Gastrocnemius medialis (tissue), 4 donors: ENCODE measurements at regions of chr12 and their contacts with region 1.

Region 1: GRCh38 chr12:120580787-120581723 is at the start of gene POP5:
- DNase-seq: peak; percentile 96
- ATAC-seq: peak; percentile 97
- H3K4me3 ChIP-seq: peak within 1 kb of the TSS; percentile 84 to 94 (median 92)
- H3K27ac ChIP-seq: peak within 1 kb of the TSS; percentile 68 to 86 (median 80)
- H3K4me1 ChIP-seq: peaks cover 6 to 14% of the 10 kb centered on the region in 2 donors
- H3K27me3 ChIP-seq: no peaks in the 10 kb centered on the region
- CTCF ChIP-seq: no peak
- POLR2A ChIP-seq: peak; percentile 24 to 49
- total RNA-seq, gene POP5: 12.2 to 23.3 (median 15.2) TPM

Region 2: DNA sequence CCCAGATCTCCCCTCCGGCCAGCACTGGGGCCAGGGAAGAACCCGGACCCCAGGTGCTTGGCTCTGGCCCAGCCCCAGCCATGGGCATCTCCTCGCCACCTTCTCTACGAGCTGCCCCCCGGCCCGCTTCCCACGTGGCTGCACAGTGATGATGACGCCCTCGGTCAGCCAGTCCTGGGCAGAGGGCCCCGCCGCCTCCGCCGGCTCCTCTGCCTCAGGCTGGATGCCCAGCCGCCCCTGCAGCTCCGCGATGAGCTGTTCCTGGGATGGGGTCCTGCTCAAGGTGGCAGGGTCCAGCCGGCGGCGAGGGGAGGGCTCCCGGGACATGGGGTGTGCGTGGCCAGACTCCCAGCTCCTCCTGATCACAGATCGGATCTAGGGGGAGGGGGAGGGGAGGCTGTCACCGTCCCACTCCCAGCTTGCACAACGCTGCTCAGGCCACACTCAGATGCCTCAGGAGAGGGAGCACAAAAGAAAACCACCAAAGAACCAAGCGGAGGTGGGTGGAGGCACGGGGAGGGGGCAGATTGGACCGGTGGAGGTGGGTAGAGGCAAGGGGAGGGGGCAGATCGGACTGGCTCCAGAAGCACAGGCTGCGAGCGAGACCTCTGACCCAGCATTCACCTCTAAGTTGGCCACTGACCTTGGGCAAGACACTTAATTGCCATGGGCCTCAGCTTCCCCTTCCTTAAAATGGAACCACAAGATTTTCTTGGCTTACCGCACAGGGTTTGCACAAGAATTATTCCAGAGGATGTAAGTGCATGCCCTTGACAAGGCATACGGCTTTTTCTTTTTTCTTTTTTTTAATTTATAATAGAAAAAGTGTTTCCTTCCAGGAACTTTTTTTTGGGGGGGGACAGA is 364.1 kb before region 1 on chr12:
- in situ Hi-C with region 1: no loop called
- intact Hi-C with region 1: no loop called
- DNase-seq: no peak
- ATAC-seq: no peak
- H3K4me3 ChIP-seq: no peak overlapping the region
- H3K27ac ChIP-seq: no peak overlapping the region
- H3K4me1 ChIP-seq: no peaks in the 10 kb centered on the region
- H3K27me3 ChIP-seq: no peaks in the 10 kb centered on the region
- CTCF ChIP-seq: no peak
- POLR2A ChIP-seq: no peak

Region 3: DNA sequence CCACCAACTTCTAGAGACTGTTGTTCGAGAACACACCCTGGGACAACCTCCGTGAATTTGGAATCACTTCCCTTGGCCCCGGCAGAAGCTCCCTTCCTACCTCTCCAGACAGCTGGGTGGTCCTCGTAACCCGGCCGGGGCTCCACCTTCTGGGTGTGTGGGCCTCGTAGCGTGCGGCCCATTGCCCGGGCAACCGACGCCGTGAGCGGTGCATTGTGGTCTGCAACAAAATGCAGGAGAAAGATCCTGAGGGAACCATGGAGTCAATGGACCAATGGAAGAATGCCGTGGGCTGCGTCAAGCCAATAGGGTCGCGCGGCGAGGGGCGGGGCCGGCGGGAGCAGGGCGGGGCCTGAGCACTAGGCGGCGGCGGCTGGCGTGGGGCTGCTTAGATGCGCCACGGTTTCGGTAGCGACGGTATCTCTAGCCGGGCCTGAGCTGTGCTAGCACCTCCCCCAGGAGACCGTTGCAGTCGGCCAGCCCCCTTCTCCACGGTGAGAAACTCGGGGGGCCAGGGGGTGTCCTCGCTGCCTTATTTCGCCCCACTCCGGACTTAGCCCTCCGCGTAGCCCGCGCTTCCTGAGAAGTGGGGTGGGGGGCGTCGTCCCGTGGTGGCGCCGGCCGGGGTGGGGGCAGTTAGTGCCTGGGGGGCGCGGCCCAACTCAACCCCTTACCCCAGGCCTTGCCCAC is 85.2 kb before region 1 on chr12 and contains the start of gene DYNLL1:
- in situ Hi-C with region 1: no loop called
- intact Hi-C with region 1: loop called (anchors 5 kb)
- DNase-seq: peak; percentile 92 to 96
- ATAC-seq: peak; percentile 98
- H3K4me3 ChIP-seq: peak within 1 kb of the TSS; percentile 66 to 100 (median 86)
- H3K27ac ChIP-seq: peak within 1 kb of the TSS; percentile 84 to 92 (median 85)
- H3K4me1 ChIP-seq: peaks cover 25 to 28% of the 10 kb centered on the region in 2 donors
- H3K27me3 ChIP-seq: no peaks in the 10 kb centered on the region
- CTCF ChIP-seq: peak in 1 of 5 experiments; percentile 25
- POLR2A ChIP-seq: peak; percentile 79 to 89
- total RNA-seq, gene DYNLL1: 16.7 to 45.0 (median 32.6) TPM

Region 4: DNA sequence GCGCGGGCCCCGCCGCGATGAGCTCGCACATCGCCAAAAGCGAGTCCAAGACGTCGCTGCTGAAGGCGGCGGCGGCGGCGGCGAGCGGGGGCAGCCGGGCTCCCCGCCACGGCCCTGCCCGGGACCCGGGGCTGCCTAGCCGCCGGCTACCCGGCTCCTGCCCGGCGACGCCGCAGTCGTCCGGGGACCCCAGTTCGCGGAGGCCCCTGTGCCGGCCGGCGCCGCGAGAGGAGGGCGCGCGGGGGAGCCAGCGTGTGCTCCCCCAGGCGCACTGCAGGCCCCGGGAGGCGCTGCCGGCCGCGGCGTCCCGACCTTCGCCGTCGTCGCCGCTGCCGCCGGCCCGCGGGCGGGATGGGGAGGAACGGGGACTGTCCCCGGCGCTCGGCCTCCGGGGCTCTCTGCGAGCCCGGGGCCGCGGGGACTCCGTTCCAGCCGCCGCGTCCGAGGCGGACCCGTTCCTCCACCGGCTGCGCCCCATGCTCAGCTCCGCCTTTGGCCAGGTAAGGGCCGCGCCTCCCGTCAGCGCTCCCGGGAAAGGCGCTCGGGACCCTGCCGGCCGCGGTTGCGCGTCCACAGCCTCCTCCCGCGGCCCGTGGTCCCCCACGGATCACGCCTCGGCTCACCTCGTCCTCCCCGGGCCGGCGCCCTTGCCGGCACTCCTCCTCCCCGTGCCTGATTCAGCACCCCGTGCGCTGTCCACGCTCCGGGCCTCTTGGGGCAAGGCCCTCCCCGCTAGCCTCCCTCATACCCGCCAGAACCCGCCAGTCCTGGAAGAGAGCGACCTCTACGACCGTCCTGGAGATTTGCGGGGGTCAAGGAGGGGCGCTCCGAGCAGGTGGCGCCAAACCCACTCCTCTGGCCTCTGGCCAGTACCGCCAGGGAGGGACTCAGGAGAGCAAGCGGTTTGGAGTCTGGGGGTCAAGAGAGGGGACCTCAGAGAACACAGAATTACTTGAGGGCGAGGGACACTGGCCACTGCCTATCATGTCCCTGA is 60.1 kb after region 1 on chr12:
- in situ Hi-C with region 1: loop called in 3 of 4 experiments (anchors 5 to 10 kb)
- intact Hi-C with region 1: no loop called
- DNase-seq: peak in 1 of 2 donors; percentile 20
- ATAC-seq: peak; percentile 70 to 71
- H3K4me3 ChIP-seq: peak overlapping the region; percentile 35 to 67 (median 50)
- H3K27ac ChIP-seq: no peak overlapping the region
- H3K4me1 ChIP-seq: peaks cover 3 to 5% of the 10 kb centered on the region in 2 donors
- H3K27me3 ChIP-seq: peaks cover 31 to 48% (median 41%) of the 10 kb centered on the region in 3 donors
- CTCF ChIP-seq: no peak
- POLR2A ChIP-seq: no peak

Region 5: DNA sequence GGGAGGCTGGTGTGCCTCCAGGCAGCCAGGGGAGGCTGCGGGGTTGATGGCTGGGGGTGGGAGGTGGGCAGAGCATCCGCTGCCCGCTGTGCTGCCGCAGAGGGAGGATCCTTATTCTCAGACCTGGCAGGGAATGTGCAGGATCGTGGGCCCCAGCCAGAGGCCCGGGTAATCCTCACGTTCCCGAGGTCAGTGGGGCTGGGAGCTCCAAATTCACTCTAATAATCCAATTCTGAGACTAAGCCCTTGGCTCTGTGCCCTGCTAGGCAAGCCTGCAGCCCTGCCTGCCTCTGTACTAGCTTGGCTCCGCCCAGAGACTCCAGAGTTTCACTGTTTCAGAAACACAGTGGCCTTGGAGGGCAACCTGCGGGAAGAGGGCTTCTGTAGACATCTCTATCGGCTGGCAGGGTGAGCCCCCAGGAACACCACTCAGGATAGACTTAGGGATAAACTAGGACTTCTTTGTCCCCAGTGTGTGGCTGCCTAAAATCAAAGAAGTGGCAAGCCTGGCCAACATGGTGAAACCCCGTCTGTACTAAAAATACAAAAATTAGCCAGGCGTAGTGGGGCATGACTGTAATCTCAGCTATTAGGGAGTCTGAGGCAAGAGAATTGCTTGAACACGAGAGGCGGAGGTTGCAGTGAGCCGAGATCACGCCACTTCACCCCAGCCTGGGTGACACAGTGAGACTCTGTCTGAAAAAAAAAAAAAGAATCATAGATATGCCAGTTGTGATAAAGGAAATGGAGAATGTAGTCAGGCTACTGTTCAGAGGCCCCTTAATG is 88.2 kb after region 1 on chr12:
- in situ Hi-C with region 1: no loop called
- intact Hi-C with region 1: no loop called
- DNase-seq: no peak
- ATAC-seq: no peak
- H3K4me3 ChIP-seq: no peak overlapping the region
- H3K27ac ChIP-seq: no peak overlapping the region
- H3K4me1 ChIP-seq: no peaks in the 10 kb centered on the region
- H3K27me3 ChIP-seq: no peaks in the 10 kb centered on the region
- CTCF ChIP-seq: no peak
- POLR2A ChIP-seq: no peak

Region 6: DNA sequence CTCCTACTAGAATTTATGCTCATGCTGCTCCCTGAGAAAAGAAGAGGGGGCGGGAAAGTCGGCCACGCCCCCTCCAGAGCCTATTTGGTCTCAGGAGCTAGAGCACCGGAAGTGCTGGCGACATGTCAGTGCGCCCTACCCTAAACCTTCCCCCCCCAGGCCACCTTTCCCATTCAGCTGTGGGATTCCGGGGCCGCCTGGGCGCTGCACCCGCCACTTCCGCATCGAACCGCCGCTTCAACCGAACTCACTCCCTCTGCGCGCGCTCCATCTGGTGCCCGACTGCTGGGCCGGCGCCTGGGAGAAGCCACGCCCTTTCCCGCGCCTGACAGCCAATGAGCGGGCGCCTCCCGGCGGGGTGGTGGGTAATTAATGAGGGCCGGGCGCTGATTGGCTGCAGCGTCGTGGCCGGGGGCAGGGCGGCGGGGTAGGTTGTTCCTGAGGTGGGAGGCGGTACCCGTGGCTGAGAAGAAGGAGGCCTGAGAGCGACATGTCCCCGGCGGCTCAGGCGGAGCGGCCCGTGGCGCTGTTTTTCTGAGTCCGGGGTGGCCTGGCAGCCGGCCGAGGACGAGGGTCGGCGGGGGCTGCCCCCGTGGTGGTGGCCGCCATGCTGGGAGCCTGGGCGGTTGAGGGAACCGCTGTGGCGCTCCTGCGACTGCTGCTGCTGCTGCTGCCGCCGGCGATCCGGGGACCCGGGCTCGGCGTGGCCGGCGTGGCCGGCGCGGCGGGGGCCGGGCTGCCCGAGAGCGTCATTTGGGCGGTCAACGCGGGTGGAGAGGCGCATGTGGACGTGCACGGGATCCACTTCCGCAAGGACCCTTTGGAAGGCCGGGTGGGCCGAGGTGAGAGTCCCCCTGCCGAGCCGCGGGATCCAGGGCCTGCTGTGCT is 105.9 kb after region 1 on chr12 and contains the start of gene MLEC:
- in situ Hi-C with region 1: no loop called
- intact Hi-C with region 1: loop called (anchors 1 kb)
- DNase-seq: peak; percentile 97 to 98
- ATAC-seq: peak; percentile 82 to 85
- H3K4me3 ChIP-seq: peak within 1 kb of the TSS; percentile 61 to 90 (median 76)
- H3K27ac ChIP-seq: peak within 1 kb of the TSS; percentile 86 to 93 (median 90)
- H3K4me1 ChIP-seq: peaks cover 37 to 49% of the 10 kb centered on the region in 2 donors
- H3K27me3 ChIP-seq: no peaks in the 10 kb centered on the region
- CTCF ChIP-seq: peak in 2 of 5 experiments; percentile 4 to 32
- POLR2A ChIP-seq: peak; percentile 90 to 96
- total RNA-seq, gene MLEC: 46.5 to 89.4 (median 60.1) TPM

Region 7: DNA sequence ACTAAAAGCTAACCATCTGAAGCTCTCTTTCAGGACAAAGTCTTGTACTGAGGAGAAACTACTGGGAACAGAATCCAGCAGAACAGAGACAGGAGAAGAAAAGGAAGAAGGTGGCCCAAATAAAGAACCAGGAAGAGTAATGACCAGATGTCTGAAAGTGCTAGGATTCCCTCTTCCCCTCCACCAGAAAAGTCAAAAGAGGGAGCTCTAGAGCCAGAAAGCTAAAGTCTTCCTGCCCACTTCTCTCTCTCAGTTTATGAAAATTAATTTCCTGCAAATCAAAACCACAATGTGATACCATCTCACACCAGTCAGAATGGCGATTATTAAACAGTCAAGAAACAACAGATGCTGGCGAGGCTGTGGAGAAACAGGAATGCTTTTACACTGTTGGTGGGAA is 275.9 kb after region 1 on chr12:
- in situ Hi-C with region 1: no loop called
- intact Hi-C with region 1: loop called (anchors 10 kb)
- DNase-seq: no peak
- ATAC-seq: no peak
- H3K4me3 ChIP-seq: no peak overlapping the region
- H3K27ac ChIP-seq: no peak overlapping the region
- H3K4me1 ChIP-seq: peaks cover 39 to 47% of the 10 kb centered on the region in 2 donors
- H3K27me3 ChIP-seq: no peaks in the 10 kb centered on the region
- CTCF ChIP-seq: peak in 1 of 5 experiments; percentile 35
- POLR2A ChIP-seq: no peak

Region 8: DNA sequence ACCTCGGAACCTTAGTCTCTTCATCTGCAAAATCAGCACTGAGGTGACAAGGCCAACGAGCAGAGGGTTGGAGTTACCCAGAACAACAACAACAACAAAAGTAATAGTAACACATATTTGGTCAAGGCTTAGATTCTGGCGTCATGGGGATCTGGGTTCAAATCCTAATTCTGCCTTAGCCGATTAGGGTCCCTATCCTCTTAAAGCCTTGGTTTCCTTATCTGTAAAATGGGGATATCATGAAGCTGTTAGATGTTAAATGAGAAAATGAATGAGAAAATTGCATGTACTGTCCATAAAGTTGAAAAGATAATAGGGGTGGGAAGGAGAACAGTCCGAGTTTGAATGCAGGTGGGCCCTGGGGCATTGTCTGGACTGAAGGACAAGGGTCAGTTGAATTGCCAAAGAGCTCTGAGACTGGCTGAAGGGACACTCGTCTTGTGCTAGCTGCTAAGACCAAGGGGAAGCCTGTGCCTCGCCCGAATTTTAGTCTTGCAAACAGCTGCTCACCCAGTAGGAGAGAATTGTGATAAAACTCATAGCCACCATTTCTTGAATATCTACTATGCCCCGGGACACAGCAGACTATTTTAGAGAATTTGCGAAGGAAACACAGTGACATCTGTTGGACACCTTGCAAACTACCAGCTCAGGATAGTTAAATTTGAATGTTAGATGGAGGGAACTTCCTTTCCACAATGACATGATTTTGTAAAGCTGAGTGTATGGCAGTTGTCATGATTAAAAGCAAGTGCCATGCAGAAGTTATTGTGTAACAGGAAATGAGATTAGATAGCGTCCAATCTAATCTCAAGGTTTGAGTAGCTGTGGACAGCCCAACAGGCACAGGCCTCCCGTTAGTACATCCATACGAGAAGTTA is 390.5 kb after region 1 on chr12:
- in situ Hi-C with region 1: no loop called
- intact Hi-C with region 1: loop called (anchors 1 kb)
- DNase-seq: no peak
- ATAC-seq: peak; percentile 68 to 95
- H3K4me3 ChIP-seq: no peak overlapping the region
- H3K27ac ChIP-seq: no peak overlapping the region
- H3K4me1 ChIP-seq: no peaks in the 10 kb centered on the region
- H3K27me3 ChIP-seq: no peaks in the 10 kb centered on the region
- CTCF ChIP-seq: peak; percentile 65 to 75 (median 68)
- POLR2A ChIP-seq: no peak

Region 9: GRCh38 chr12:121095544-121096198 is 514.6 kb after region 1 on chr12:
- in situ Hi-C with region 1: no loop called
- intact Hi-C with region 1: loop called (anchors 2 kb)
- DNase-seq: peak; percentile 19 to 25
- ATAC-seq: peak; percentile 47 to 80
- H3K4me3 ChIP-seq: peak overlapping the region; percentile 1 to 47 (median 34)
- H3K27ac ChIP-seq: no peak overlapping the region
- H3K4me1 ChIP-seq: peaks cover 5 to 9% of the 10 kb centered on the region in 2 donors
- H3K27me3 ChIP-seq: peaks cover 0 to 10% (median 6%) of the 10 kb centered on the region in 3 donors
- CTCF ChIP-seq: peak; percentile 31 to 83 (median 65)
- POLR2A ChIP-seq: no peak